Panc1 (cell line): ENCODE measurements at regions of chr5 and their contacts with region 1.

Region 1: GRCh38 chr5:172479044-172479783 is 24.9 kb upstream of the SH3PXD2B start:
- DNase-seq: peak; percentile 67
- ATAC-seq: peak; percentile 99
- H3K4me3 ChIP-seq: no peak overlapping the region
- H3K27ac ChIP-seq: no peak overlapping the region
- H3K4me1 ChIP-seq: no peaks in the 10 kb centered on the region
- H3K27me3 ChIP-seq: no peaks in the 10 kb centered on the region
- CTCF ChIP-seq: peak; percentile 93

Region 2: GRCh38 chr5:172458976-172459782 is 20.0 kb before region 1 on chr5:
- CTCF ChIA-PET with region 1: interaction called, 11 read pairs
- POLR2A ChIA-PET with region 1: interaction called, 7 read pairs
- in situ Hi-C with region 1: no loop called
- intact Hi-C with region 1: no loop called
- DNase-seq: no peak
- ATAC-seq: no peak
- H3K4me3 ChIP-seq: no peak overlapping the region
- H3K27ac ChIP-seq: no peak overlapping the region
- H3K4me1 ChIP-seq: peaks cover 17% of the 10 kb centered on the region
- H3K27me3 ChIP-seq: no peaks in the 10 kb centered on the region
- CTCF ChIP-seq: no peak

Region 3: DNA sequence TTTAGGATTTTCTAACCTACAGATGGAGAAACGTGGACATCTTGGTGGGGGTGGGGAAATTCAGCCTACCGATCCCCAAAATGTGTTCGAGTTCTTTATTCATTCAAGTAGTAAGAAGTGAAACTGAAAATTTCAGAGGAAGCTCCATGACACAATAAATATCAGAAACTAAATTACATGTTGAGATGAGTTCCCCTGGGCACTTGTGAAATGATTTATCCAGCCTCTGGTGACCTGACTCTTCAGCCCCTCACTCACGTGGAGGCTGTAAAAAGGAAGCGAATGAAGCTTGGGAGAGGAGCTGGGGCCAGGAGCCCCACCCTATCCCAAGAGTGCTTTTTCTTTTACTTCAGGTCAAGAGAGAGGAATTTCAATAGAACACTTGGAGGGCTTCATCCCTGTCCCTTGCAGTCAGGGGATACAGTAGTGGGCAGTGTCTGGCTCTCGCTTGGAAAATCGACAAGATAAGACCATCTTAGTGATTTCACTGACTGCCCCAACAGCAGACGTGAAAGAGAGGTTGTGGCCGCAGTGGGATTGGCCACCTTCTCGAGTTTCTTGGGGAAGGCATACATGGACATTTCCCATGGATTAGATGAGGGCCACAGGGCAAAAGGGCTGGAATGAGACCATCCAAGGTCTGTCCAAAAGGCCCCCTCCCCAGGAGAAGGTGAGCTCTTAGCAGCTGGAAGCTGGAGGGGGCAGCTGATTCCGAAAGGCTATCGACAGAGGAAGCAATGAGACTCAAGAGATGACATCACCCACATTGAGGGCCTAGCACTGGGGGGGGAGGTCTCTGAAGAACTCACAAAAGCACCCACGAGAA is 51.9 kb after region 1 on chr5:
- CTCF ChIA-PET with region 1: no interaction called
- POLR2A ChIA-PET with region 1: no interaction called
- in situ Hi-C with region 1: no loop called
- intact Hi-C with region 1: no loop called
- DNase-seq: no peak
- ATAC-seq: no peak
- H3K4me3 ChIP-seq: no peak overlapping the region
- H3K27ac ChIP-seq: no peak overlapping the region
- H3K4me1 ChIP-seq: peaks cover 7% of the 10 kb centered on the region; the same call in 1 of the 2 replicates
- H3K27me3 ChIP-seq: no peaks in the 10 kb centered on the region
- CTCF ChIP-seq: no peak

Region 4: DNA sequence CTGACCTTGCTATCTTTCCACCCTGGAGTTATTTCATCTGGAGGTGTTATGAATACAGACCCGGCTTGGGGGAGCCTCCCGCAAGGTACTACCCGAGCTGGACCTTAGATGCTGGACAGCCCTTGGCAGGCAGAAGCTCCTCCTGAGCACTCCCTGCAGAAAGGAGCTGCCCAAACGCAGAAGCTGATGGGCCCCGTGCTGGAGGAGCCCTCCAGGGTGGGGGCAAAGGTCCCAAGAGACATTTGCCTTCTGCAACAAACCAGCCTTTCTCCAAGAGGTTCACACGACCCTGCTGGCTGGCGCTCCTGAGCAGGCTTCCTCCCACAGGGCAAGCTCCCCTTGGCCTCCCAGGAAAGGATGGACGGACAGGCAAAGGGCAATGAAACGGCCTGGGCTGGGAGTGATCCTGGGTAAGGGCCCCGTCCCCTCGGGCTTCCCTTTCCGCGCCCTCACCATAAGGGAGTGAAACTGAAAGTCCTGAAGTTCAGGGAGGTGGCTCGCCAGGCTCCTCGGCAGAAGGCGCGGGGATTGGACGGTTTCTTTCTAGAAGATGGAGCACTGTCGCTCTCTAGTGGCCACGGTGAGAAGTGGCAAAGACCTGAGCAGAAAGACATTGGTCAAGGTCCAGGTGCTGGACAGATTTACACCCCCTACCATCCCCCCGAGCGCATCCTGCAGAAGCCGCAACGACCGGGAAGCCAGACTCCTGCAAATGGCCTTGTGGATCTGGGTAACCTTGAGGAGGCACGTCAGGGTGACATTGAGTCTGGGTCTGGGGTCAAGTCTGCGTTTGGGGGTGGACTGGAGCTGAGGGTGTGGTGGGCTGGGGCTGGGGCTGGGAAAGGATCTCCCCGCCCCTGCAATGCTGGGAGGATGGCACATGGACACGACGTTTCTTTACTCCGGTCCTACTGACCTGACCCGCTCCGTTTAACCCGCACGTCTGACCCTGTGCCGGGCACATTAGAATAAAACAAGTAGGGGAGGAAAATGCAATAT is 218.2 kb after region 1 on chr5:
- CTCF ChIA-PET with region 1: interaction called, 6 read pairs
- POLR2A ChIA-PET with region 1: no interaction called
- in situ Hi-C with region 1: no loop called
- intact Hi-C with region 1: loop called (anchors 1 kb)
- DNase-seq: peak; percentile 67
- ATAC-seq: peak; percentile 89
- H3K4me3 ChIP-seq: peak overlapping the region; percentile 53 to 69
- H3K27ac ChIP-seq: peak overlapping the region; percentile 80
- H3K4me1 ChIP-seq: peaks cover 9% of the 10 kb centered on the region
- H3K27me3 ChIP-seq: no peaks in the 10 kb centered on the region
- CTCF ChIP-seq: peak; percentile 94

Region 5: GRCh38 chr5:172958331-172959046 is 479.3 kb after region 1 on chr5:
- CTCF ChIA-PET with region 1: no interaction called
- POLR2A ChIA-PET with region 1: no interaction called
- in situ Hi-C with region 1: no loop called
- intact Hi-C with region 1: loop called (anchors 10 kb)
- DNase-seq: no peak
- ATAC-seq: peak; percentile 86
- H3K4me3 ChIP-seq: peak overlapping the region; percentile 82 to 85
- H3K27ac ChIP-seq: peak overlapping the region; percentile 82
- H3K4me1 ChIP-seq: peaks cover 18% of the 10 kb centered on the region
- H3K27me3 ChIP-seq: no peaks in the 10 kb centered on the region
- CTCF ChIP-seq: no peak